ENCODE measurements at regions of chr1 and their contacts with region 1.

Region 1: GRCh38 chr1:35451125-35451528 is 106.1 kb downstream of the KIAA0319L start:
- DNase-seq: peak; percentile 94
- H3K4me3 Mint-ChIP-seq: no peak overlapping the region
- H3K27ac Mint-ChIP-seq: peak overlapping the region; percentile 48
- H3K4me1 Mint-ChIP-seq: peaks cover 29% of the 10 kb centered on the region
- H3K27me3 Mint-ChIP-seq: no peaks in the 10 kb centered on the region

Region 2: GRCh38 chr1:35202048-35202719 is 248.9 kb before region 1 on chr1:
- intact Hi-C with region 1: loop called (anchors 10 kb)
- DNase-seq: peak; percentile 92
- H3K4me3 Mint-ChIP-seq: no peak overlapping the region
- H3K27ac Mint-ChIP-seq: no peak overlapping the region
- H3K4me1 Mint-ChIP-seq: peaks cover 6% of the 10 kb centered on the region
- H3K27me3 Mint-ChIP-seq: peaks cover 22% of the 10 kb centered on the region

Region 3: GRCh38 chr1:35319988-35320713 is 131.0 kb before region 1 on chr1:
- intact Hi-C with region 1: no loop called
- DNase-seq: peak; percentile 48
- H3K4me3 Mint-ChIP-seq: no peak overlapping the region
- H3K27ac Mint-ChIP-seq: no peak overlapping the region
- H3K4me1 Mint-ChIP-seq: peaks cover 2% of the 10 kb centered on the region
- H3K27me3 Mint-ChIP-seq: no peaks in the 10 kb centered on the region

Region 4: DNA sequence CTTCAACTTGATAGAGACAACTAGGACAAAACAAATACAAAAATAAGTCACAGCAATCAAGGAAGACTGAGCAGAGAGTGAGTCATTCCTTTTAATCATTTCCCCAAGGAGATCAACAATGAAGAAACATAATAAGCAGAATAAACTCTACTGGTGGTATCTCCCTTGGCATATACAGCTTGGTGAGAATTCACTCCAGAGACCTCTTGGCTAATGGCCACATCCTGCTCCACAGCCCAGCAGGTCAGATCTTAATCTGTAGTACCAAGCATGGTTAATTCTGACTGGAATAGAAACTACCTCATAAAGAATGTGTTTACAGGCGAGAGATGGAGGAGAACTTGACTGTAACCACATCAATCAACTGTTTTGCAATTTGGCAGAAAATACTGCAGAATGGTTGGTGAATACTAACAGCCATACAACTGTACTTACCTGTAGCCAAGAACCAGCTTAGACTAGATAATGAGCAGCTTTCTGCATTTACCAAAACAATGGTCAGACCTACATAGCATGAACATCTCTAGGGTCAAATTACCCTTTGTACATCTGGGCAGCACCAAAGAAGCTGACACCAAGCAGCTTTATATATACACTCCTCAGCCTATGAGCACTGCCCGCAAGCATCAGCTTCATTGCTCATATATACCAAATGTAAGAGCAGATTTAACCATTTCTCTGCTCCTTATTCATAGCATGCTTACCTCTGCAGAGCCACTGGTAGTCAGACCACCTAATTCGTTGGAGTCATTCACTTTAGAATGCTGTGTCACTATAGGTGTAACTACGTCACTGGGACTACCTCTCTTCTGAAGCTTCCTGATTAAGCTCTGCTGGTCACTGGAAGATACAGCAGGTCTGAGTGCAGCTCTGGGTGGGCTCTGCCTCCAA is 55.0 kb after region 1 on chr1:
- intact Hi-C with region 1: loop called (anchors 5 kb)
- DNase-seq: peak; percentile 91
- H3K4me3 Mint-ChIP-seq: peak overlapping the region; percentile 79
- H3K27ac Mint-ChIP-seq: peak overlapping the region; percentile 91
- H3K4me1 Mint-ChIP-seq: peaks cover 61% of the 10 kb centered on the region
- H3K27me3 Mint-ChIP-seq: no peaks in the 10 kb centered on the region

Region 5: DNA sequence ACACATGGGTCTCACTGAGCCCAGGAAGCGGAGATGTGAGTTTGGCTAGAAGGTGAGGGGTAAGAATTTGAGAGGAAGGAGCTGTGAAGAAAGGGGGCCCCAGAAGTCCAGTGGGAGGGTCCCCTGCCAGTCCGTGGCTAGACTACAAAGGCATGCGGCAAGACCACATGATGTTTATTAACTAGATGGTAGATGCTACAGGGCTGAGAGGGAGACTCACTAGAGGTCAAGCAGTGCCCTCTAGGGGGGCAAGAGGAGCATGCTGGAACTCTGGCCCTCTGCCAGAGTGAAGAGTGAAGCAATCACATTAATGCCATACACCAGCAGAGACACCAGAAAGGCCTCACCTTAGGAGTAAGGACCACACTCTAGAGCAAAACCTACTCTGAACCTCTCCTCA is 93.9 kb after region 1 on chr1:
- intact Hi-C with region 1: loop called (anchors 1 kb)
- DNase-seq: peak; percentile 85
- H3K4me3 Mint-ChIP-seq: no peak overlapping the region
- H3K27ac Mint-ChIP-seq: no peak overlapping the region
- H3K4me1 Mint-ChIP-seq: peaks cover 34% of the 10 kb centered on the region
- H3K27me3 Mint-ChIP-seq: no peaks in the 10 kb centered on the region

Region 6: DNA sequence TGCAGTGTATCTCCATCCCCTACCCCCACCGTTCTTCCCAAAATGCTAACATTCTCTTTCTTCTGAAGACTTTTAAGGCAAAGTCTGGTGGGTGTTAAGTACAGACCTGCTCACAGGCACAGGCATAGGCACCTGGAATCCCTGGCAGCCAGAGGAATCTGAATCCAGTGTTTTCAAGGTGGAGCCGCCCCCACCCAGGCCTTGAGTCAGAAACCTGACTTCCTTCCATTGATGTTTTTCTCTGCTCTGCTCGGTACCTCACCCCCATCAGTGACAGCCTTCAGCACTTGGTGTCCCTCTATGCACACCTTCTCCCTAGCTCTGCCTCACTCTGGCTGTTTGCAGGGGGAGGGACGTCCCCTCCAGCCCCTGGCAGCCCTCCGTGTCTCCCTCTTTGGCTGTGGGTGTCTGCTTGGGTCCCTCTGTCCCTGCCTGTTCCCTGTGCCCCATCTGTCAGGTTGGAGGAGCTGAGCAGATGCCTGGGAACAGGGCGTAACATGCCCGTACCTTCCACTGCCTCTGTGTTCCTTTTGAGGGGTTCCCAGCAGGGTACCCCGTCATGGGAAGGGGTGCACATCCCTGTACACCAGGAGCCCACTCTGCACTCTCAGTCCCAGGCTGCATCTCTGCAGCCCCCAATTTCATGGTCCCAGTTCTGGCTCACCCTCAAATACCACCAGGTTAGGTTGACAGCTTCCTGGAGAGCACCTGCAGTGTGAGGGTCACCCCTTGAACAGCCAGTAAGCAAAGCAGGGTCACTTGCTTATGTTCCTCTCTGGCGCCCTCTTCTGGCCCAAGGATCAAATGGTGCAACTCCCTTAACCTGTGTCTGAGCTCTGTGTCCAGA is 113.1 kb after region 1 on chr1:
- intact Hi-C with region 1: loop called (anchors 1 kb)
- DNase-seq: peak; percentile 94
- H3K4me3 Mint-ChIP-seq: no peak overlapping the region
- H3K27ac Mint-ChIP-seq: peak overlapping the region; percentile 48
- H3K4me1 Mint-ChIP-seq: peaks cover 27% of the 10 kb centered on the region
- H3K27me3 Mint-ChIP-seq: no peaks in the 10 kb centered on the region

Region 7: GRCh38 chr1:35715568-35716002 is 264.5 kb after region 1 on chr1:
- intact Hi-C with region 1: loop called (anchors 5 kb)
- DNase-seq: peak; percentile 94
- H3K4me3 Mint-ChIP-seq: peak overlapping the region; percentile 65
- H3K27ac Mint-ChIP-seq: no peak overlapping the region
- H3K4me1 Mint-ChIP-seq: peaks cover 36% of the 10 kb centered on the region
- H3K27me3 Mint-ChIP-seq: no peaks in the 10 kb centered on the region